Sciatic nerve (tissue), 2 donors: ENCODE measurements at regions of chrX and their contacts with region 1.

Region 1: GRCh38 chrX:1477801-1478458 is 25.2 kb upstream of the ASMTL start:
- DNase-seq: no peak
- ATAC-seq: no peak

Region 2: DNA sequence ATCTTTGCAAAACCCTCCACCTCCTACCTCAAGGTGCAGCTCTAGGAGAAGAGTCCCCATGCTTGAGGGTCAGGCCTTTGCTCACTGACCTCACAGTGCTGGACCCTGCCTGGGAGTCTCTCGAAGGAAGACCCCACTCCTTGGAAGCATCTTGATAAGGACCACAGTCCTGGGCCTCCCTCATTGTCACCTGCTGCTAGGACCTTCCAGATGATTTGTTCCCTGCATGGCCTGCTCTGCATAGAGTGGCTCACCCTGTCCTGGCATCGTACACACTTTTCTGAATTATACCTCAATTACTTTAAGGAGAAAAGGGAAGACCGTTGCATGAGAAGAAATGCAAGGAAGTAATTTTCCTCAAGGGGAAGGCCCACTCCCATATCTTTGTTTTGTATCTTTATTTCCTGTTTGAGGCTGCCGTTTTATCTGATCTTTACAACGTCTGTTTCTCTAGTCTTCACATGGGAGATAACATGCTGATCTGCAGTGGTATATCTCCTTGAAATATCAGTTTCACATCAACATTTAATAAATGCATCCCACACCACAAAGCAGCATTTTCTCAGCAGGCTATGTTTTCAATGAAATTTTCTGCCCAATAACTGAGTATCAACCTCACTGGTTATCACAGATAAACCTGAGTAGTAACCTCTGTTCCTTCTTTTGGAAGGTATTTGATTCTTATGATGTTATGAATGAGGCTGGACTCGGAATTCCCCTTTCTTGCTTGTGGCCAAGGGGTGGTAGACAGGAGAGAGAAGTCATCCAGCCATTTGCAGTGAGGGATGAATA is 98.5 kb after region 1 on chrX:
- intact Hi-C with region 1: loop called (anchors 10 kb)
- DNase-seq: no peak
- ATAC-seq: no peak